ENCODE measurements at regions of chr19 and their contacts with region 1.

Region 1: GRCh38 chr19:39163621-39164020 is 33.1 kb upstream of the NCCRP1 start:
- DNase-seq: no peak
- ATAC-seq: no peak
- H3K4me3 ChIP-seq: no peak overlapping the region
- H3K4me3 Mint-ChIP-seq: no peak overlapping the region
- H3K27ac ChIP-seq: no peak overlapping the region
- H3K27ac Mint-ChIP-seq: no peak overlapping the region
- H3K4me1 ChIP-seq: no peaks in the 10 kb centered on the region
- H3K4me1 Mint-ChIP-seq: peaks cover 2% of the 10 kb centered on the region
- H3K27me3 ChIP-seq: no peaks in the 10 kb centered on the region
- H3K27me3 Mint-ChIP-seq: no peaks in the 10 kb centered on the region
- CTCF ChIP-seq: no peak

Region 2: DNA sequence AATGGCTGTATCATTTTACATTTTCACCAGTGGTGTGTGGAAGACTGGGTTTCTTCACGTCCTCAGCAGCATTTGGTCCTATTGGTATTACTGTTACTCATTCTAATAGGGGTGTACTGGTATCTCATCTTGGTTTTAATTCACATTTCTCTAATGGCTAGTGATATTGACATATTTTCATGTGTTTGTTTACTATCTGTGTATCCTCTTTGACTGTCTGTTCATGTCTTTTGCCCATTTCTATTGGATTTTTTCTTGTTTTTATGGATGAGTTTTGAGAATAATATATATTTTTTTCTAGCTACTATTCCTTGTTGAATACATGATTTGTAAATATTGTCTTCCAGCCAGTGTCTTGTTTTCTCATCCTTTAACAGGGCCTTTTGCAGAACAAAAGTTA is 118.4 kb after region 1 on chr19:
- CTCF ChIA-PET with region 1: no interaction called
- POLR2A ChIA-PET with region 1: no interaction called
- intact Hi-C with region 1: no loop called
- DNase-seq: no peak
- ATAC-seq: no peak
- H3K4me3 ChIP-seq: no peak overlapping the region
- H3K4me3 Mint-ChIP-seq: no peak overlapping the region
- H3K27ac ChIP-seq: no peak overlapping the region
- H3K27ac Mint-ChIP-seq: no peak overlapping the region
- H3K4me1 ChIP-seq: no peaks in the 10 kb centered on the region
- H3K4me1 Mint-ChIP-seq: no peaks in the 10 kb centered on the region
- H3K27me3 ChIP-seq: peaks cover 0 to 7% (median 0%) of the 10 kb centered on the region in 4 experiments
- H3K27me3 Mint-ChIP-seq: peaks cover 12% of the 10 kb centered on the region
- CTCF ChIP-seq: no peak

Region 3: DNA sequence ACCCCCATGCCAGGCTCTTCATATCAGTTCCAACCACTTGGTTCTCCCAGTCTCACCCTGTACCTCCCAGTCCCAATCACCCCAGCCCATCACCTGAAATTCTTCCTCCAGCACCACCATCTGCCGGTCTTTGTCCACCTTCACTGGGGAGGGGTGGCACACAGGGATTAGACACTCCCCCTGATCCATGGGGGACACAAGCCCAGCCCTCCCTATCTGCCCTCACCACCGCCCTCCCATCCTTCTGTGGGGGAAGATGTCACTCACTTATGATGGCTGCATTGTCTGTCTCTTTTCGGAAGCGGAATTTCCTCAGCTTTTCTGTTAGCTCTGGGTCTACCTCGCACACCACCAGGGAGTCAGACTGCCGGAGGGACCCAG is 171.5 kb after region 1 on chr19:
- CTCF ChIA-PET with region 1: no interaction called
- POLR2A ChIA-PET with region 1: interaction called, 10 read pairs
- intact Hi-C with region 1: no loop called
- DNase-seq: no peak
- ATAC-seq: peak; percentile 4
- H3K4me3 ChIP-seq: peak overlapping the region; percentile 39 to 98 (median 80)
- H3K4me3 Mint-ChIP-seq: peak overlapping the region; percentile 99
- H3K27ac ChIP-seq: peak overlapping the region; percentile 84 to 88
- H3K27ac Mint-ChIP-seq: peak overlapping the region; percentile 99
- H3K4me1 ChIP-seq: peaks cover 38 to 43% of the 10 kb centered on the region in 2 donors
- H3K4me1 Mint-ChIP-seq: peaks cover 53% of the 10 kb centered on the region
- H3K27me3 ChIP-seq: no peaks in the 10 kb centered on the region
- H3K27me3 Mint-ChIP-seq: no peaks in the 10 kb centered on the region
- CTCF ChIP-seq: no peak